Right ventricle myocardium inferior (tissue), 1 donor: ENCODE measurements at regions of chr2 and their contacts with region 1.

Region 1: GRCh38 chr2:102355526-102356380 is at the start of gene IL18R1:
- DNase-seq: peak; percentile 94
- ATAC-seq: peak; percentile 100
- total RNA-seq, gene IL18R1: 1.0 TPM

Region 2: GRCh38 chr2:102010902-102011301 is 344.9 kb before region 1 on chr2:
- intact Hi-C with region 1: loop called (anchors 10 kb)
- DNase-seq: no peak
- ATAC-seq: peak; percentile 48

Region 3: DNA sequence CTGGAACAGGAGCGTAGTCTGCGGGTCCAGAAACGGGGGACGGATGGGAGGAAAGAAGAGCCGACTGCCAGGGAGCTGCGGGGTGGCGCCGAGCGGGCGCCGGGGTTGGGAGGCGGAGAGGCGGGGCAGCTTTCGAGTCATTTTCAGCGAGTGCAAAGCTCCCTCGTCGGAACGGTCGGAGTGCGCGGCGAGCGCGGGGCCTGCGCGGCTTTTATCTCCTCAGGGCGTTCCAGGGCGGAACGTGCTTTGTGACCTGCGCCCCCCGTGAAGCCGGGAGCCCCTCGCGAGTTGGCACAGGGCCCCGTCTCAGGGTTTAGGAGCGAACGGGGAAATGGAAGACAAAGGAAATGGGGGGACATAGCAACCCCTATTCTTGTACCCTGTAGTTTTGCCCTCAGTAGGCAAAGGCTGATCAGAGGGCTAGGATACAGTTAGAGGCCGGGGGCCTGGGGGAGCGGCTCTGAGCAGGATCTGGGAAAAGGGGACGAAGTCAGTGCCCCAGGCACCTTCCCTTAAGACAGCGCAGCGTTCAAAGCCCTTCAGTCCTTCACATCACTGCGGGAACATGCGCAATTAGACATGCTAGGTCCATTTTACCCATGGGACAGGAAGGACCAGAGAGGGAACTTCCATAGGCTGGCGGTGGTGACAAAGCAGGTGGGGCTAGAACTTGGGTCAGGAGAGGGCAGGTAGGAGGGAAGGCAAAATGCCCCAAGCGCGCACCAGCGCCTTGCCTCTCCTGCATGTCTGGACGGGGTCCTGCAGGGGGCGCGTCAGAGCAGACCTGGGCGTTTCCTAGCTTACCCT is 104.5 kb before region 1 on chr2:
- intact Hi-C with region 1: loop called (anchors 5 kb)
- DNase-seq: peak; percentile 91
- ATAC-seq: peak; percentile 74

Region 4: DNA sequence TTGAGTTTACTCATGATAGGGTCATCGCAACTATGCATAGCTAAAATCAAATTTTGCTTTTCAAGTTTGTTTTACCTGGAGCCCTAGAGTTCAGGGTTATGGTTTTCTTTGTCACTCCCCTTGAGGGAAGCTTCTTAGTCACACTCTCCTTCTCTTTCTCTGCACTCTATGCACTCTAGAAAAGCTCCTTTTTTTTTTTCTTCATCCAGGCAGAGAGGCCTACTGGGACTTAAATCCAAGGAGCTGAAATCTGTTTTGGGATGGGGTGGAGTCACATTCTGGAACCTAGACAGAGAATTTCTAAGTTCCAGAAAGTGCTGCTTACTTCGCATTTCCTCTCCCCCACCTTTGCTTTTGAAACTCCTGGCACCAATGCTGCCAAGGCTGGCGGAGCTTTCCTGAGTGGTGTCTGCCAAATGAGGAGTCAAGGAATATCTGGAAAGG is 19.2 kb before region 1 on chr2:
- intact Hi-C with region 1: no loop called
- DNase-seq: no peak
- ATAC-seq: peak; percentile 76